ENCODE measurements at regions of chr1 and their contacts with region 1.

Region 1: DNA sequence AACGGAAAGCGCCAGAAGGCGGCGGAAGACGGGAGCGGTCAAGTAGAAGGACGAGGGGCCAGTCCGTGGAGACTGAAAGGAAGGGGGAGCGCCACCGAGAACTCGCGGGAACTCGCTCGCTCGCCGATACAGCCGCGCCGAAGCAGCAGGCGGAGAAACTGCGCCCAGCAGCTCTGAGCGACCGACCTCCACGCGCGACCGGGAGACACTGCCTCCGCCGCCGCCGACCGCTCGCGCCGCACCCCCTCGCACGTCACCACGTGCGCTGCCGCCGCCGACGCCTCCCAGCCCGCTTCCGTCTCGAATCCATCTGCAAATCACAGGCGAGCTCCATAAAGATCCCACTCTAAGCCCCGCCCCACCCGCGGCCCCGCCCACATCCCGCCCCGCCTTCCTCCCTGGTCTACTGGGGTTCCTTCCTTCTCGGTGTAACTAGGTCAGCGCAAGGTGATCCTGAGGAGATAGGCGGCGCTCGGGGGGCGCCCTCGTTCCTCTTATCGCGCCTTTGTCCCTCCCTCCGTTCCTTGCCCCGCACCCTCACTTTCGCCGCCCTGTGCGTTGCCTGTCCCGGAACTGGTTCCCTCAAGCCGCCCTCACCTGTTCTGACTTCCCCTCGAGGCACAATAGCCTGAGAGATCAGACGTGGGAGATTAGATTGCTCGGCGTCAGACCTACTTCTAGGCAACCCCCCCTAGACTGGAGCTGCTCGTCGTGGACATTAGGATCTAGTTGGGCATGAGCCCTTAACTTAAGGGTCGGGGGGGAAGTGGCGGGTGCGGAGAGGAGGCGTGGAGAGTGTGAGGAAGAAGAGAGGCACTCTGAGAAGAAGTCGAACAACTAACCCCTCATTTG is at the start of gene IVNS1ABP:
- DNase-seq: peak; percentile 91 to 99 (median 94)
- ATAC-seq: peak; percentile 72
- H3K4me3 ChIP-seq: peak within 1 kb of the TSS; percentile 92 to 97
- H3K4me3 Mint-ChIP-seq: peak within 1 kb of the TSS; percentile 97
- H3K27ac ChIP-seq: peak within 1 kb of the TSS; percentile 97
- H3K27ac Mint-ChIP-seq: peak within 1 kb of the TSS; percentile 99
- H3K4me1 ChIP-seq: peaks cover 38% of the 10 kb centered on the region
- H3K4me1 Mint-ChIP-seq: peaks cover 49% of the 10 kb centered on the region
- H3K27me3 ChIP-seq: no peaks in the 10 kb centered on the region
- H3K27me3 Mint-ChIP-seq: no peaks in the 10 kb centered on the region
- CTCF ChIP-seq: no peak
- total RNA-seq, gene IVNS1ABP: 227 to 237 TPM

Region 2: GRCh38 chr1:184754476-184755225 is 562.6 kb before region 1 on chr1 and contains the start of gene EDEM3:
- CTCF ChIA-PET with region 1: no interaction called
- POLR2A ChIA-PET with region 1: interaction called, 5 read pairs
- intact Hi-C with region 1: loop called (anchors 1 to 5 kb)
- DNase-seq: peak; percentile 94 to 100 (median 97)
- ATAC-seq: peak; percentile 92
- H3K4me3 ChIP-seq: peak within 1 kb of the TSS; percentile 80 to 91
- H3K4me3 Mint-ChIP-seq: peak within 1 kb of the TSS; percentile 93
- H3K27ac ChIP-seq: peak within 1 kb of the TSS; percentile 80 to 84
- H3K27ac Mint-ChIP-seq: peak within 1 kb of the TSS; percentile 97
- H3K4me1 ChIP-seq: peaks cover 22% of the 10 kb centered on the region
- H3K4me1 Mint-ChIP-seq: peaks cover 50% of the 10 kb centered on the region
- H3K27me3 ChIP-seq: no peaks in the 10 kb centered on the region
- H3K27me3 Mint-ChIP-seq: no peaks in the 10 kb centered on the region
- CTCF ChIP-seq: no peak
- total RNA-seq, gene EDEM3: 9.3 to 14.8 TPM

Region 3: GRCh38 chr1:185238447-185238846 is 78.8 kb before region 1 on chr1:
- CTCF ChIA-PET with region 1: interaction called, 39 read pairs
- POLR2A ChIA-PET with region 1: interaction called, 36 read pairs
- intact Hi-C with region 1: loop called (anchors 1 to 2 kb)
- DNase-seq: peak in 2 of 9 experiments; percentile 24 to 55
- ATAC-seq: peak; percentile 38
- H3K4me3 ChIP-seq: no peak overlapping the region
- H3K4me3 Mint-ChIP-seq: no peak overlapping the region
- H3K27ac ChIP-seq: no peak overlapping the region
- H3K27ac Mint-ChIP-seq: no peak overlapping the region
- H3K4me1 ChIP-seq: peaks cover 3% of the 10 kb centered on the region
- H3K4me1 Mint-ChIP-seq: peaks cover 26% of the 10 kb centered on the region
- H3K27me3 ChIP-seq: no peaks in the 10 kb centered on the region
- H3K27me3 Mint-ChIP-seq: no peaks in the 10 kb centered on the region
- CTCF ChIP-seq: peak; percentile 74

Region 4: DNA sequence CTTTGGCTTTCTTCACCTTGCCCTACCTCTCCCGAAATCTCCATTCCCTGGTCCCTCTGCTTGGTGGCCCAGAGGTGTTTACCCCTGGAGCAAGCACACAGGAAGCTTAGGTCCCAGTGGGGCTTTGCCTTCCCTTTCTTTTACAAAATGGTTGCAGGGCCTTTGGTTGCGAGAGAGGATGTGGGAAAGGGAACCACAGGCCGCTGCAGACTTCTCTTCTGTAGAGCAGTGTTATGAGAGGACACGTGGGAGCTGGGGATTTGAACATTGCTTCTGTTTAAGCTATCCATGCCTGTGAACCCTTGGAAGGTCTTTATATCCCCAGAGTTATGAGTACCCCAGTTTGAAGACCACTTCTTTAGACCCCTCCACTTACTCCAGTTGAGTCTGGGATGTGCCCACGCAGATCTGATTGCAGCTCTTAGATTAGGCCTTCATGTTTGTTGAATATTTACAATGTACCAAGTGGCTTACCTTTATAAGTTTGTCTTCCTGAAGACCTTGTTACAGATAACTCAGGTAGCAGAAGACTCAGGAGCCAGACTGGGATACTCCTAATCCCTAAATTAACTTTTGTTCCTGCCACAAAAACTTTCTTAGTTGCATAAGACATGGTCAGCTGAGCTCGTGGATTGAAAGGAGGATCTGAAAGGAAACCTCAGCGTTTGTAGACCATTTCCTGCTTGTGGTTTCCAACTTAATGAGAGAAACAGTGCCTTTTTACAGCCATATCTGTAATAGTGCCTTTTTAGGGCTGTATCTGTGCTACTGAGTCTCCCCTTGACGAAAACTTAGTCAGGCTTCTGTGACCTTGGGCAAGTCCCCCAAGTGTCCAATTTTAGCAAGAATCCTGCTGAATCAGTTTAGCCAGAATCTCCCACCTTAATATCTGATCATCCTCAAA is 21.7 kb after region 1 on chr1:
- CTCF ChIA-PET with region 1: interaction called, 4 read pairs
- POLR2A ChIA-PET with region 1: interaction called, 31 read pairs
- intact Hi-C with region 1: loop called in 1 of 2 experiments (anchors 2 kb)
- DNase-seq: peak in 8 of 9 experiments; percentile 11 to 79 (median 50)
- ATAC-seq: peak; percentile 81
- H3K4me3 ChIP-seq: peak overlapping the region in 1 of 2 experiments; percentile 15
- H3K4me3 Mint-ChIP-seq: peak overlapping the region; percentile 55
- H3K27ac ChIP-seq: peak overlapping the region; percentile 19 to 57
- H3K27ac Mint-ChIP-seq: peak overlapping the region; percentile 81
- H3K4me1 ChIP-seq: peaks cover 33% of the 10 kb centered on the region
- H3K4me1 Mint-ChIP-seq: peaks cover 34% of the 10 kb centered on the region
- H3K27me3 ChIP-seq: no peaks in the 10 kb centered on the region
- H3K27me3 Mint-ChIP-seq: no peaks in the 10 kb centered on the region
- CTCF ChIP-seq: no peak

Region 5: GRCh38 chr1:185595835-185596667 is 278.8 kb after region 1 on chr1:
- CTCF ChIA-PET with region 1: interaction called, 24 read pairs
- POLR2A ChIA-PET with region 1: interaction called, 21 read pairs
- intact Hi-C with region 1: loop called (anchors 10 kb)
- DNase-seq: peak; percentile 18 to 76 (median 55)
- ATAC-seq: peak; percentile 78
- H3K4me3 ChIP-seq: no peak overlapping the region
- H3K4me3 Mint-ChIP-seq: no peak overlapping the region
- H3K27ac ChIP-seq: no peak overlapping the region
- H3K27ac Mint-ChIP-seq: no peak overlapping the region
- H3K4me1 ChIP-seq: peaks cover 6% of the 10 kb centered on the region
- H3K4me1 Mint-ChIP-seq: peaks cover 16% of the 10 kb centered on the region
- H3K27me3 ChIP-seq: no peaks in the 10 kb centered on the region
- H3K27me3 Mint-ChIP-seq: no peaks in the 10 kb centered on the region
- CTCF ChIP-seq: peak; percentile 58

Region 6: DNA sequence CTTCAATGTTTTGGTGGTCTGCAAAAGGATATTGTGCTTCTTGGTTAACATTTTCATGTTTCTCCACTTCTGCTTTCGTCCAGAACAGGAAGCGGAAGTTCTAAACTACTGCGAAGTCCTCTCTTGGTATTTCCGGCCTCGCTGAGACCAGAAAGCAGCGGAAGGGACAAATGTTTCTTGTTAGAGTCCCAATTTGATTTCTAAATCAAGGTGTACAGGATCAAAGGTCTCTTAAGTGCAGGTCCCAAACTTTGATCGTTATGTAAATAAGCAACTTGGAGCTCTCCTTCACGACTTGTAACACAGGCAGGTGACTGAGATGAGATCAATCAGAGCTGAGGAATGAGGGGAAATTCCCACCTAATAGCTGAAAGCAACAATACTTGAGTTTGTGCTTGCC is 376.8 kb after region 1 on chr1:
- CTCF ChIA-PET with region 1: interaction called, 12 read pairs
- POLR2A ChIA-PET with region 1: interaction called, 22 read pairs
- intact Hi-C with region 1: no loop called
- DNase-seq: peak in 5 of 9 experiments; percentile 9 to 68 (median 40)
- ATAC-seq: peak; percentile 48
- H3K4me3 ChIP-seq: peak overlapping the region; percentile 31 to 36
- H3K4me3 Mint-ChIP-seq: peak overlapping the region; percentile 76
- H3K27ac ChIP-seq: peak overlapping the region; percentile 38 to 77
- H3K27ac Mint-ChIP-seq: peak overlapping the region; percentile 91
- H3K4me1 ChIP-seq: peaks cover 18% of the 10 kb centered on the region
- H3K4me1 Mint-ChIP-seq: peaks cover 23% of the 10 kb centered on the region
- H3K27me3 ChIP-seq: no peaks in the 10 kb centered on the region
- H3K27me3 Mint-ChIP-seq: peaks cover 3% of the 10 kb centered on the region
- CTCF ChIP-seq: no peak

Measured in CD8-positive, alpha-beta T cell (primary cell).